Vagina (tissue), 2 donors: ENCODE measurements at regions of chr3 and their contacts with region 1.

Region 1: GRCh38 chr3:52428151-52429005 is 16.5 kb downstream of the SEMA3G start:
- DNase-seq: no peak
- H3K4me3 ChIP-seq: no peak overlapping the region
- H3K27ac ChIP-seq: no peak overlapping the region
- H3K4me1 ChIP-seq: peaks cover 20% of the 10 kb centered on the region
- H3K27me3 ChIP-seq: no peaks in the 10 kb centered on the region
- CTCF ChIP-seq: peak; percentile 53 to 82 (median 69)
- POLR2A ChIP-seq: no peak

Region 2: DNA sequence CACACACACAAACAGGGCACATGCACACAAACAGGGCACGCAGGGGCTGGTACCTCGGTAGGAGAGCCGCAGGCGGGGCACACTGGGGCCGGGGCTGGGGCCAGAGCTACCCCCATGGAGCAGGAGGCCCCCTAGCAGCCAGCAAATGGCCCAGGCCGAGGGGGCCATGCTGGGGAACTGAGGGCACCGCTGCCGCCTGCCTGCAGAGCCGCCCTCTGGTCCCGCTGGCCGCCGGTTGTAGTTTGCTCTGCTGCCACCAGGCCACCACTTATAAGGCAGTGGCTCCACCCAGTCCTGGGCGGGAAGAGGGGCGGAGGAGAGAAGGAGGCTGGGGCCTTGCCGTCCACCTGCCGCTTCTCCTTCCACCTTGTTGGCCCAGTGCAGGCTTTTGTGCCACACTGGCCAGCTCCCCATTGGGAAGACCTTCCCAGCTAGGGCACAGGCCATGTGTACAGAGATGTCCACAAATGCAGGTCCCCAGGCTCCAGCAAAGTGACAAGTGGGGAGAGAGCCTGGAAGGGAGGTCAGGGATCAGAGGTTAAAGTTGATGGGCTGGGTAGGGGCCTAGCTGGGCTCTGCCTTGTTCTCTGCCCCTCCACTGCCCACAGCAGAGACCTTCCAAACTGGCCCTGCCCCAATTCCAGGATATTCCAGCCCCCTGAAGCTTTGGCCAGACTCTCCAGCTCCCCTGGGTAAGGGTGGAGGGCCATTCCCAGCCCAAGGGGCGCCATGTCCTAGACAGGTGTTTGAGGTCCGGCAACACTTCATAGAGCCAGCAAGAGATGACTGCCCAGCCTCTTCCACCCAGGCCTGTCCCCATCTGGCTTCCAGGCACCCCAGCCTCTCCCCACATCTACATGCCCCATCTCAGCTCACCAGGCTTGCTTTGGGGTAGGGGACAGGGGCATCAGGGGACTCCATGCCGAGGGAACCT is 16.7 kb after region 1 on chr3 and contains the start of gene SEMA3G:
- intact Hi-C with region 1: loop called (anchors 2 kb)
- DNase-seq: no peak
- H3K4me3 ChIP-seq: peak within 1 kb of the TSS in 1 of 2 donors; percentile 28
- H3K27ac ChIP-seq: no peak within 1 kb of the TSS
- H3K4me1 ChIP-seq: no peaks in the 10 kb centered on the region
- H3K27me3 ChIP-seq: no peaks in the 10 kb centered on the region
- CTCF ChIP-seq: peak in 1 of 3 experiments; percentile 29
- POLR2A ChIP-seq: no peak
- total RNA-seq, gene SEMA3G: 8.3 TPM

Region 3: DNA sequence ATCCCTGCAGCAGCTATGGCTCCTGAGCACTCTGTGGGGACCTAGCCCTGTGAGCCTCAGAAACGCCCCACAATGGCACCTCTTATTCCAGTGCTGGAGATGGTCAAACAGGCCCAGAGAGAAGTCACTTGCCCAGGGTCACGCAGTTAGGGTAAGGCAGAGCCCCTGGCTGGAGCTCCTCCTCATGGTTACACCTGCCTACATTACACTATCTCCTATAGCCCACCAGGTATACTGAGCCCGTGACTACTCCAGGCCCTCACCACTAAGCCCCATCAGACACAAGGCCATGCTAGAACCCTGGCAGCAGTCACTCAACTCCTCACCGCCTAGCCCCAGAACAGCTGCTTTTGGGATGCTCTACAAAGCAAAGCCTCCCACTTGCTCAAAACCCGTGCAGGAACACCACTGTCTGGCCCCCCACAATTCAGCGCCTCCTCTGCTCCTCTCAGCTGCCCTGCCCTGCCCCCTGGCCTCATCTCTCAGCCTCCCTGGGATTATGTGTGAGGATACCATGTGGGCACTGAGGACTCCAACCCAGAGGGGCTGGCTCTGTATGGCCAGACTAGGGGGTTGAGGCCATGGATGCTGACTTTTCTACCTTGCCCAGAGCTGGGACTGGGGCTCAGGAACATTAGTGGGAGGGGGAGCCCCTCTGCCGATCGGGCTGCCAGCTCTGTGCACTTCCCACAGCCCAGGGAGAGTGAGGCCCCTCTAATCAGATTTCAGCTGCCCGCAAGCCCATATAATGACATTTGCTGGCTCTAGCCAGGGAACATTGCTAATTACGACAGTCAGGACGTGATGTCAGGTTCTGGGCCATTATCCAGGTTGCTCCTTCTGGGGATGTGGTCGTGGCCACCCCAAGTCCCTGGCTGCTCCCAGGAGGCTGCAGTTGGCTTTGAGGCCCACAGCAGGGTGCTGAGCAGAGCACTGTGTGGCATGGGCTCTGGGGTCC is 101.3 kb after region 1 on chr3:
- intact Hi-C with region 1: loop called (anchors 10 kb)
- DNase-seq: no peak
- H3K4me3 ChIP-seq: peak overlapping the region in 1 of 2 donors; percentile 4
- H3K27ac ChIP-seq: peak overlapping the region; percentile 11
- H3K4me1 ChIP-seq: peaks cover 73% of the 10 kb centered on the region
- H3K27me3 ChIP-seq: no peaks in the 10 kb centered on the region
- CTCF ChIP-seq: no peak
- POLR2A ChIP-seq: no peak